ENCODE measurements at regions of chr2 and their contacts with region 1.

Region 1: GRCh38 chr2:11129598-11130449 is 25.4 kb upstream of the SLC66A3 start:
- DNase-seq: no peak
- H3K4me3 ChIP-seq: peak overlapping the region; percentile 47 to 55 (median 48)
- H3K27ac ChIP-seq: peak overlapping the region in 2 of 4 donors; percentile 18 to 43
- H3K4me1 ChIP-seq: peaks cover 16 to 35% (median 32%) of the 10 kb centered on the region in 4 donors
- H3K27me3 ChIP-seq: peaks cover 0 to 12% (median 0%) of the 10 kb centered on the region in 4 donors
- CTCF ChIP-seq: peak in 1 of 3 experiments; percentile 27
- EP300 ChIP-seq: no peak
- POLR2A ChIP-seq: no peak

Region 2: DNA sequence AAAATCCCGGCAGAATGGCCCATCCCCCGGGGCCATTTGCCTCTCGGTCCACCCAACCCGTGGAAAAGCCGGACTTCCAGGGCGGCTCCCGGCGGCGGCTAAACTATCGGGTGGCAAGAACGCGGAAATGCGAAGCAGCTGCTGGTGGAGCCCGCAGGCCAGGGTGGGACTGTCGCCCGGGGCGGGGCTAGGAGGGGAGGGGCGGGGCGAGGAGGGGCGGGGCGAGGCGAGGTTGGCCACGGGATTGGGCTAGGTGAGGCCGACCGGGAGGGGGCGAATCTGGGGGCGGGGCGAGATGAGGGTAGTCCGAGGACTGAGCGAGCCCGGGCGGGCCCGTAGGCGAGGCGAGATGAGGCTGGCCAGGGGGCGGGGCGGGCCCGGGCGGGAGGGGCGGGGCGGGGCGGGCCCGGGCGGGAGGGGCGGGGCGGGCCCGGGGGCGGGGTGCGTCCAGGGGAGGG is 25.1 kb after region 1 on chr2:
- intact Hi-C with region 1: loop called (anchors 2 kb)
- DNase-seq: peak; percentile 100
- H3K4me3 ChIP-seq: peak overlapping the region; percentile 71 to 84 (median 79)
- H3K27ac ChIP-seq: peak overlapping the region; percentile 88 to 93 (median 92)
- H3K4me1 ChIP-seq: peaks cover 15 to 33% (median 26%) of the 10 kb centered on the region in 4 donors
- H3K27me3 ChIP-seq: no peaks in the 10 kb centered on the region
- CTCF ChIP-seq: no peak
- EP300 ChIP-seq: no peak
- POLR2A ChIP-seq: peak; percentile 55

Region 3: DNA sequence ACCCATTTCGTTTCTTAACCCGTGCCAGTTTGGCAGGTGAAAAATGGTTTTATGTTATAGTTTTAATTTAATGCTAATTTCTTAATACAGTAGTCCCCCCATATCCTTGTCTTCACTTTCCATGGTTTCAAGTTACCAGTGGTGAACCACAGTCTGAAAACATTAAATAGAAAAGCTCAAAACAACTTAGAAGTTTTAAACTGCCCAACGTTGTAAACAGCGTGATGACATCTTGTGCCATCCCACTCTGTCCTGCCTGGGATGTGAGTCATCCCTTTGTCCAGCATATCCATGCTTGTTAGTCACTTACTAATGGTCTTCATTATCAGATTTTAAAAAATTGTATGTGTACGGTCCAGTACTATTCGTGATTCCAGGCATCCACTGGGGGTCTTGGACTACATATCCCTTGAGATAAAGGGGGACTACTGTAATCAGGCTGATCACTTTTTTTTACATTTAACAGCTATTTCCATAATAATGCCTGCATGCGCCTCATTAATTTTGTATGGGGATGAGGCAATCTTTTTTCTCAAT is 57.3 kb after region 1 on chr2:
- intact Hi-C with region 1: loop called (anchors 10 kb)
- DNase-seq: no peak
- H3K4me3 ChIP-seq: no peak overlapping the region
- H3K27ac ChIP-seq: no peak overlapping the region
- H3K4me1 ChIP-seq: no peaks in the 10 kb centered on the region
- H3K27me3 ChIP-seq: no peaks in the 10 kb centered on the region
- CTCF ChIP-seq: no peak
- EP300 ChIP-seq: no peak
- POLR2A ChIP-seq: no peak

Region 4: DNA sequence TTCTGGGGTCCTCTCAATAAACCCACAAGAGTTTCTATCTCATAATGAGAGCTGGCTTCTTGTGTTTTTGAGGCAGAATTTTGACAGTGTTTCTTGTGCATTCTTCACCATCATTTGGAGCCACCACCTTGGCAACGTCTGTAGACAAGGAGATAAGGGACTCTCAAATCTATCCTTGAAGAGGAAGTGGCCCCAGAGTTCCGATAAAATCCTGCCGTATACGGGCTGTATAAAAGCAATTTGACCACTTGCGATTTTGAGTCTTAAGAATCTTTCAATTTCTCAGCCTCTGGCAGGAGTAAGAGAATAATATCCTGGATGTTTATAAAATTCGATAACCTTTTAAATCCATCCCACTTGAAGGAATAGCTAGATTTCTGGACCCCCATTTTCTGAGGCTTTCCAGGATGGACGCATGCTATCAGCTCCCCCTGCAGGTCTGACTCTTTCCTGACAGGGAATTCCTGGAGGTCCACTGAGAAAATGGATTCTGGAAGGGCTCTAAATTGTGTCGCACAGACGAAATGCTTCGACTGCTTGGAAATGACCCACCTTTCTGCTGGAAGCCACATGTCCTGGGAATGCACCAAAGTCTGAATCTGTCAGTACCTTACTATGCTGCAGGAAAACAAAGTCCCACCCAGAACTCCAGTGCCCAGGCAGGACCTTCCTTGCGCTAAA is 282.1 kb after region 1 on chr2:
- intact Hi-C with region 1: loop called (anchors 10 kb)
- DNase-seq: no peak
- H3K4me3 ChIP-seq: peak overlapping the region; percentile 36 to 57 (median 41)
- H3K27ac ChIP-seq: no peak overlapping the region
- H3K4me1 ChIP-seq: peaks cover 7 to 28% (median 21%) of the 10 kb centered on the region in 4 donors
- H3K27me3 ChIP-seq: no peaks in the 10 kb centered on the region
- CTCF ChIP-seq: peak; percentile 74 to 84 (median 78)
- EP300 ChIP-seq: no peak
- POLR2A ChIP-seq: no peak

Region 5: GRCh38 chr2:11446733-11447248 is 317.0 kb after region 1 on chr2:
- intact Hi-C with region 1: loop called (anchors 5 kb)
- DNase-seq: no peak
- H3K4me3 ChIP-seq: no peak overlapping the region
- H3K27ac ChIP-seq: peak overlapping the region in 3 of 4 donors; percentile 14 to 55 (median 26)
- H3K4me1 ChIP-seq: peaks cover 0 to 6% (median 1%) of the 10 kb centered on the region in 4 donors
- H3K27me3 ChIP-seq: no peaks in the 10 kb centered on the region
- CTCF ChIP-seq: peak; percentile 80 to 88 (median 81)
- EP300 ChIP-seq: no peak
- POLR2A ChIP-seq: no peak

Region 6: GRCh38 chr2:11583840-11584524 is 454.2 kb after region 1 on chr2:
- intact Hi-C with region 1: loop called (anchors 10 kb)
- DNase-seq: peak; percentile 94
- H3K4me3 ChIP-seq: no peak overlapping the region
- H3K27ac ChIP-seq: peak overlapping the region; percentile 30 to 62 (median 54)
- H3K4me1 ChIP-seq: peaks cover 13 to 36% (median 28%) of the 10 kb centered on the region in 4 donors
- H3K27me3 ChIP-seq: peaks cover 0 to 4% (median 0%) of the 10 kb centered on the region in 4 donors
- CTCF ChIP-seq: peak; percentile 77 to 88 (median 88)
- EP300 ChIP-seq: no peak
- POLR2A ChIP-seq: no peak

Measured in esophagus muscularis mucosa (tissue), 4 donors.